T-cell (primary cell): ENCODE measurements at regions of chr6 and their contacts with region 1.

Region 1: DNA sequence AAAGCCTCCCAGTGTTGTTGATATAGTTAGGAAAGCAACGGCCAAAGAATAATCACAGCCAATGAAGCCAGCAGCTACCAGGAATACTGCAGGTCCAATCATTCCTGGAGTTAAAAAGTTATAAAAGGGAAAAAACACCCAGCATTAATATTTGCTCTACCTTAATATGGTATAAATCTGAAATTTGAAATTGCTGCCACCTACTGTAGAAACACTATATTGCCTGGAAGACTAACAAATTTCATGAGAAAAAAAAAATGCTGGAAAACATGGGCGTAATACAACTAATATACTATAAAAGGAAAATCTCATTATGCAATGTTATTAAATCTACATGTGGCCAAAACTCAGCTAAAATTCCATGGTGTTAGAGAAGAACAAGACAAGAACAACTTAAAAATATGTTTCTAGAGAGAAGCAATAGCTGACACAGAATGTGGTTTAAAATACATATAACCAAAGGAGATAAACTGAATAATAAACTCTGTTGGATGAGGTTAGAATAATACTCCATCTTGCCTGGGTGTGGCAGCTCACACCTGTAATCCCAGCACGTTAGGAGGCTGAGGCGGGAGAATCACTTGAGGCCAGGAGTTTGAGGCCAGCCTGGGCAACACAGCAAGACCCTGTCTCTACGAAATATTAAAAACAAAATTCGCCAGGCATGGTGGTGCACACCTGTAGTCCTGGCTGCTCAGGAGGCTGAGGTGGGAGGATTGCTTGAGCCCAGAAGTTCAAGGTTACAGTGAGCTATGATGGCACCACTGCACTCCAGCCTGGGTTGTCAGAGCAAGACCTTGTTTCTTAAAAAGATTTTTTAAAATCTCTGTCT is 43.1 kb downstream of the SLC17A5 start:
- DNase-seq: peak in 2 of 35 experiments; percentile 11 to 73
- ATAC-seq: peak; percentile 36 to 69 (median 48)
- H3K4me3 ChIP-seq: no peak overlapping the region
- H3K4me3 Mint-ChIP-seq: no peak overlapping the region
- H3K27ac ChIP-seq: no peak overlapping the region
- H3K27ac Mint-ChIP-seq: peak overlapping the region in 1 of 2 donors; percentile 53
- H3K4me1 ChIP-seq: no peaks in the 10 kb centered on the region
- H3K4me1 Mint-ChIP-seq: peaks cover 4 to 6% (median 4%) of the 10 kb centered on the region in 3 donors
- H3K27me3 ChIP-seq: no peaks in the 10 kb centered on the region
- H3K27me3 Mint-ChIP-seq: no peaks in the 10 kb centered on the region

Region 2: GRCh38 chr6:73400656-73401055 is 210.0 kb before region 1 on chr6:
- CTCF ChIA-PET with region 1: no interaction called
- POLR2A ChIA-PET with region 1: no interaction called
- DNase-seq: no peak
- ATAC-seq: no peak
- H3K4me3 ChIP-seq: no peak overlapping the region
- H3K4me3 Mint-ChIP-seq: no peak overlapping the region
- H3K27ac ChIP-seq: no peak overlapping the region
- H3K27ac Mint-ChIP-seq: no peak overlapping the region
- H3K4me1 ChIP-seq: no peaks in the 10 kb centered on the region
- H3K4me1 Mint-ChIP-seq: no peaks in the 10 kb centered on the region
- H3K27me3 ChIP-seq: no peaks in the 10 kb centered on the region
- H3K27me3 Mint-ChIP-seq: no peaks in the 10 kb centered on the region

Region 3: GRCh38 chr6:73653571-73654424 is 43.1 kb after region 1 on chr6 and contains the start of gene SLC17A5:
- CTCF ChIA-PET with region 1: interaction called, 3 to 10 read pairs
- POLR2A ChIA-PET with region 1: interaction called in 1 of 2 experiments, 4 read pairs
- DNase-seq: peak; percentile 78 to 93 (median 86)
- ATAC-seq: peak; percentile 91 to 95 (median 92)
- H3K4me3 ChIP-seq: peak within 1 kb of the TSS; percentile 80 to 98
- H3K4me3 Mint-ChIP-seq: peak within 1 kb of the TSS; percentile 94 to 97 (median 96)
- H3K27ac ChIP-seq: peak within 1 kb of the TSS; percentile 98
- H3K27ac Mint-ChIP-seq: peak within 1 kb of the TSS; percentile 95 to 97
- H3K4me1 ChIP-seq: peaks cover 6 to 17% of the 10 kb centered on the region in 2 experiments
- H3K4me1 Mint-ChIP-seq: peaks cover 34 to 37% (median 34%) of the 10 kb centered on the region in 3 donors
- H3K27me3 ChIP-seq: no peaks in the 10 kb centered on the region
- H3K27me3 Mint-ChIP-seq: no peaks in the 10 kb centered on the region
- total RNA-seq, gene SLC17A5: 6.4 to 15.0 (median 9.4) TPM

Region 4: DNA sequence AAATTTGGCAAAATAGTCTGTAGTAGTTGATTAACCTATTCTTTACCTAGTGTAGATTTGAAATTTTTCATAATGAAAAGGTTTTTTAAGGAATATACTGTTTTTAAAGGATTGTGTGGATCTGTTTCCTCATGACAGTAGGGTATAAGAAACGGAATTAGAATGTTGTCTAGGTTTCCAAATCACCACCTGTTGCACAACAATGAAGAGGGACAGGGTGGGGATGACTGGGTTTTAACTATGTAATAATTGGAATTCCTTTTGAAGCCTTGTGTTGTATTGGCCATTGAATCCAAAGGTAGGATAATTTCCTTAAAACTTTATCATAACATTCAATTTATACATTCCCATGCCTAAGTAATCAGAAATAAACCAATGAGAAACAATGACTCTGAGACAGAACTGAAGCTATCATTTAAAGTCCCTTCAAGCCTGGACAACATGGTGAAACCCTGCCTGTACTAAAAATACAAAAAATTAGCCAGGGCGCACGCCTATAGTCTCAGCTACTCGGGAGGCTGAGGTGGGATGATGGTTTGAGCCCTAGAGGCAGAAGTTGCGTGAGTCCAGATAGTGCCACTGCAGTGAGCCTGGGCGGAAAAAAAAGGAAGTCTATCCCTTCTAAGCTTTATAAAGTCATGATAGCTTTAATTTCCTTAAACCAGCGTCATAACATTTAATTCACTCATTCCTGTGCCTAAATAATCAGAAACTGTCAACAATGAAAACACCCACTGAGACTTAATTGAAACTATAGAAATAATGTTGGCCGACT is 61.4 kb after region 1 on chr6:
- CTCF ChIA-PET with region 1: no interaction called
- POLR2A ChIA-PET with region 1: no interaction called
- DNase-seq: no peak
- ATAC-seq: no peak
- H3K4me3 ChIP-seq: no peak overlapping the region
- H3K4me3 Mint-ChIP-seq: no peak overlapping the region
- H3K27ac ChIP-seq: no peak overlapping the region
- H3K27ac Mint-ChIP-seq: no peak overlapping the region
- H3K4me1 ChIP-seq: no peaks in the 10 kb centered on the region
- H3K4me1 Mint-ChIP-seq: no peaks in the 10 kb centered on the region
- H3K27me3 ChIP-seq: peaks cover 0 to 7% of the 10 kb centered on the region in 2 experiments
- H3K27me3 Mint-ChIP-seq: peaks cover 26 to 31% of the 10 kb centered on the region in 2 donors